ENCODE measurements at regions of chr4 and their contacts with region 1.

Region 1: GRCh38 chr4:98995183-98996055 is at the start of gene METAP1:
- DNase-seq: peak; percentile 95
- H3K4me3 Mint-ChIP-seq: peak within 1 kb of the TSS; percentile 84
- H3K27ac Mint-ChIP-seq: peak within 1 kb of the TSS; percentile 92
- H3K4me1 Mint-ChIP-seq: peaks cover 38% of the 10 kb centered on the region
- H3K27me3 Mint-ChIP-seq: no peaks in the 10 kb centered on the region
- total RNA-seq, gene METAP1: 65.6 to 70.1 TPM

Region 2: DNA sequence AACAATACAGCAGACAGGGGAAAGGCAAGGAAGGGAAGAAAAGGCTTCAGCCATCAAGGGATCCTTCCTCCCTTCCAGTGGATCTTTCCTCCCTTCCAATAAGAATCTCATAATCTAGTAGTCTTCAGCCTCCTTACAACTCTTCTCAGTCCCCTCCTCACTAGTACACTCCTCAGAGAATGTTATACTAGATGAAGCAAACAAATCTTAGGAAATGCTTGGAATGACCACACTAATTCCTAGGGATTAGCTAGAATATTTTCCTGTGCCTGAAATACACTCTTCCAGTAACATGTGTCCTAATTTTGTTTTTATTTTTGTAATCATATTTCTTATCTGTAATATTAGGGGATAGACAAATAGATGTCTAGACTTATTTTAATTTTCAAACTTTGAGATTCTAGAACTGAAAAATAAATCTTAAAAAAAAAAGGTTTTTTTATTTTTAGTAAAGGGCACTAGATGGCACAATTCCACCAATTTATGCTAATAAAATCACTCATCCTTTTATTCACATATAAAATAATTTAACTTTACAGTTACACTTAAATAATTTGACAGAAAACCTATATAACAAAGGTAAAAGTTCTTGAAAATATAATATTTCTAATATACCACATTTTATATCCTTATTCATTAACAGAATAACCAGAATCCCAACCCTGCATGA is 845.2 kb before region 1 on chr4:
- CTCF ChIA-PET with region 1: no interaction called
- intact Hi-C with region 1: loop called (anchors 1 kb)
- DNase-seq: no peak
- H3K4me3 Mint-ChIP-seq: no peak overlapping the region
- H3K27ac Mint-ChIP-seq: no peak overlapping the region
- H3K4me1 Mint-ChIP-seq: peaks cover 5% of the 10 kb centered on the region
- H3K27me3 Mint-ChIP-seq: peaks cover 6% of the 10 kb centered on the region

Region 3: GRCh38 chr4:98467627-98468072 is 527.8 kb before region 1 on chr4:
- CTCF ChIA-PET with region 1: interaction called, 7 read pairs
- intact Hi-C with region 1: loop called (anchors 1 kb)
- DNase-seq: peak; percentile 85
- H3K4me3 Mint-ChIP-seq: peak overlapping the region; percentile 65
- H3K27ac Mint-ChIP-seq: no peak overlapping the region
- H3K4me1 Mint-ChIP-seq: peaks cover 16% of the 10 kb centered on the region
- H3K27me3 Mint-ChIP-seq: no peaks in the 10 kb centered on the region

Region 4: DNA sequence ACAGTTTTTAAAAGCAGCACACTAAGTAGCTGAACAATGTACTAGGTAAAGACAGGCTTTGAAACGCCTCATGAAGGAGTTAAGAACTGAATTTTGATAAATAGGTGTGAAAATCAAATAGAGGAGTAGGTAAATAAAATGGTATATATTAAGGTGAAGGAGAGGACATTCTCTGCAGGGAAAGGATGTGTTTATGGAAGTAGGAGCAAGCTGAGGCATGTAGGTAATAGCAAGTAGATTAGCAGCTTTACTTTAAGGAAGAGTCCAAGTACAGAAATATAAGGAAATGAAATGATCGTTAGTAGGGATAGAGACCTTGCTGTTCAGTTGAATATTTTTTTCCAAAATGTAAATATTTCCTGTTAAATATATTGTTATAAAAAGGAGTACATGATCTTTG is 12.6 kb after region 1 on chr4:
- CTCF ChIA-PET with region 1: interaction called, 14 read pairs
- intact Hi-C with region 1: no loop called
- DNase-seq: no peak
- H3K4me3 Mint-ChIP-seq: no peak overlapping the region
- H3K27ac Mint-ChIP-seq: no peak overlapping the region
- H3K4me1 Mint-ChIP-seq: peaks cover 34% of the 10 kb centered on the region
- H3K27me3 Mint-ChIP-seq: no peaks in the 10 kb centered on the region

Region 5: DNA sequence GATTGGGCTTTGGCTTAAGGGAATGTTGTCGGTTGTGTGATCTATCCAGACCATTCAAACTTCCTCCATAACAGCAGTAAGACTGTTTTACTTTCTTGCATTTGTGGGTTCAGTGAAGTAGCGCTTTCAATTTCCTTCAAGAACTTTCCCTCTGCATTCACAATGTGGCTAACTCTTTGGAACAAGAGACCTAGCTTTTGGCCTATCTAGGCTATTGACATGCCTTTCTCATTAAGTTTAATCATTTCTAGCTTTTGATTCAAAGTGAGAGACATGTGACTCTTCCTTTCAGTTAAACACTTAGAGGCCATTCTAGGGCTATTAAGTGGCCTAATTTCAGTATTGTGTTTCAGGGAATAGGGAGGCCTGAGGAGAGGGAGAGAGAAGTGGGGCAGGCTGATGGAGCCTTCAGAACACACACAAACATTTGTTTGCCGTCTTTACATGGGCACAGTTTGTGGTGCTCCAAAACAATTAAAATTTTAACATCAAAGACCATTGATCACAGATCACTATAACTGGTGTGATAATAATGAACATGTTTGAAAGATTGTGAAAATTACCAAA is 59.1 kb after region 1 on chr4:
- CTCF ChIA-PET with region 1: interaction called, 162 read pairs
- intact Hi-C with region 1: loop called (anchors 1 kb)
- DNase-seq: no peak
- H3K4me3 Mint-ChIP-seq: no peak overlapping the region
- H3K27ac Mint-ChIP-seq: peak overlapping the region; percentile 50
- H3K4me1 Mint-ChIP-seq: peaks cover 44% of the 10 kb centered on the region
- H3K27me3 Mint-ChIP-seq: no peaks in the 10 kb centered on the region

Region 6: DNA sequence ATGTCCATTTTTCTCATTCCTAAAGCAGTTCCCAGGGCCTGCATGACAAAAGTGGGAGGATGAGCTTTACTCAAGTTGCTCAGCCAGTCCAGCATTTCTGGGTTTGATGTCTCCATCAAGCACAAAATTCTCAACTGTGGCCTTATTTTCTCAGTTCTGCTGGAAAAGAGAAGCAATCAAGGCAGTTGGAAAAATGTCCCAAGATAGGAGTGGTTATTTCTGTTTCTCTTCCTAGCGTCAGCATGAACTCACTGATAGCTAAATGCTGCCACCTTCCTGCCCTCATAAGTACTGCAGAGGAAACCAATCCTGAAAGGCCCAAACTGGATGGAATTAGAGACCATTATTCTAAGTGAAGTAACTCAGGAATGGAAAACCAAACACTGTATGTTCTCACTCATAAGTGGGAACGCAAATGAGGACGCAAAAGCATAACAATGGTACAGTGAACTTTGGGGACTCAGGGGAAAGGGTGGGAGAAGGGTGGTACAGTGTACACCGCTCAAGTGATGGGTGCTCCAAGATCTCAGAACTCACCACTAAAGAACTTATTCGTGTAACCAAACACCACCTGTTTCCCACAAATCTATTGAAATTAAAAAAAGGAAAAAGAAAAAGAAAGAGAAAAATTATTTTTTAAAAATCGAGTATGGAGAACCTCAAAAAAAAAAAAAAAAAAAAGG is 410.2 kb after region 1 on chr4:
- CTCF ChIA-PET with region 1: interaction called, 8 read pairs
- intact Hi-C with region 1: loop called (anchors 1 kb)
- DNase-seq: peak; percentile 77
- H3K4me3 Mint-ChIP-seq: no peak overlapping the region
- H3K27ac Mint-ChIP-seq: no peak overlapping the region
- H3K4me1 Mint-ChIP-seq: no peaks in the 10 kb centered on the region
- H3K27me3 Mint-ChIP-seq: no peaks in the 10 kb centered on the region

Region 7: DNA sequence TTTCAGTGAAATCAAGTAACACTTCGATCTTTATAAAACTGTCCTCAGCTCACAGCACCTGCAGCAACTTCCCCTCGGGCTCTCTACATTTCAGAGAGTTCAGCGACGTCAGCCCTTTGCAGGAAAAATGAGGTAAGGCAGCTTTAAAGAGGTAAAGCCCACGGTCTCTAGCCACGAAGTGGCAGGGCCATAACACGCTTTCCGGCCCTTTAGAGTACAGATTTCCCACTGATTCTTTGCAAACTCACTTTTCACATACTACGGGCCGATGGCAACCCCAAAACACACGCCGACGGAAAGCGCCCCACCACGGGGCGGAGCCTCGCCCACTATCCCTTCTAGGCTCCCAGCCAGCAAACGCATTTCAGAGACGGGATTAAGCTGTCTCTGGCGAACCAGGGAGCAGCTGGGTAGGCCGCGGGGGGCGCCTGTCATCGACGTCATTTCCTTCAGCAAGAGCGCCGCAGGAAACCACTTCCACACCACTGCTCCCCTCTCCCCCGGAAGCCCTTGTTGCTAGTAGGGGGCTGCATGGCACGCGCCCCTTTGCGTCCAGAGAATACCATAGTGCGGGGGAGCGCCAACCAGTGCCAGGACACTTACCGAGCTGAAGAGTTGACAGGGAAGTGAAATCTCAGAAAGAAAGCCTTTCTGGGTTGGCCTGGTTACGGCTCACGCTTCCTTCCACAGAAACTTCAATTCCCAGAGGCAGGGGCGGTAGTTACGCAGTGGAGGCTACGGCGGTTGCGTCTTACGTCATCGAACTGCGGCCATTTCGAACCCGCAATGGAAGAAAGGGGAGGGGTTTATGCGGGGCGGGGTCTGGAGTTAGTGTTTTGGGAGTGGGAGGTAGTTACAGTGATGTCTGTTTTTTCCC is 568.1 kb after region 1 on chr4 and contains the start of gene TRMT10A:
- CTCF ChIA-PET with region 1: no interaction called
- intact Hi-C with region 1: loop called (anchors 1 kb)
- DNase-seq: peak; percentile 97
- H3K4me3 Mint-ChIP-seq: peak within 1 kb of the TSS; percentile 93
- H3K27ac Mint-ChIP-seq: peak within 1 kb of the TSS; percentile 96
- H3K4me1 Mint-ChIP-seq: peaks cover 14% of the 10 kb centered on the region
- H3K27me3 Mint-ChIP-seq: peaks cover 6% of the 10 kb centered on the region
- total RNA-seq, gene TRMT10A: 8.8 to 9.2 TPM